Posterior vena cava (tissue), 2 donors: ENCODE measurements at regions of chr5 and their contacts with region 1.

Region 1: DNA sequence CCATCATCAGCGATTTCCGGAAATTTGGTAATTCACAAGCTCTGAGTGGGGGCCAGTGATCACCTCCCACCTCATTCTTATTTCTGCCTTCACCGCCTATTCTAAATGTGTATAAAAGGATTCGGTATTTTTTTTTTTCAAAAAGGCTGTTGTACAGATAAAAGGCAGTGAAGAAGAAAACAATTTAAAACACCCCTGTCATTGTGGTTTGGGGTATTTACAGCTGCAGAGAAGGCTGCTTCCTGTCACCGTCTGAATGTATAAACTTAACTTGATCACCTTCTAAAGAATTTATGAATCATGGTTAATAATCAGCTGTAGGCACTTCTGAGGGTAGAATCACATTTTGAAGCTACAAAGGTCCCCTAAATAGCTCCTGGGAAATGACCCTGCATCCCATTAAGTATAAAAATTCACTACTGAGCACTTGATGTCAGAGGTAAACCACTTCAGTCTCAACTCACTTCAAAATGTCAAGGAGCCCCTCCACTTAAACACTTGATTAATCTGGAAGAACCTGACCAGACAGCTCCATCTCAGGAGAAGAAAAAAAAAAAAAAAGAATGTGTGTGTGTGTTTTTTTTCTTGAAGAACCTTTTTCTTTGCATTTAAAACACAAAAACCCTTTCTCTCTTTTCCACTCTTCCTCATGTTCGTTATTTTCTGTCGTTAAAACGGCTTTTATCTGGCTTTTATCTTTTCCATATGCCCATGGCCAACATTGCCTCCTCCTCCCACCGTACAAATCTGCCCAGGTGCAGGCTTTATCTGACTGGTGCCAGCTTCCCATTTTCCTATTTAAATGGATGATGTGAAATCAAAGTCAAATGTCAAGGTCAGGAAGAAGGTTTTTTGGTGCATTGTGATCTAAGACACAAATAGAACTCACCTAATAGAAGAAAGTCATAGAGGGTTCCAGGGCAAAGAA is 291.2 kb downstream of the IRX1 start:
- DNase-seq: no peak

Region 2: DNA sequence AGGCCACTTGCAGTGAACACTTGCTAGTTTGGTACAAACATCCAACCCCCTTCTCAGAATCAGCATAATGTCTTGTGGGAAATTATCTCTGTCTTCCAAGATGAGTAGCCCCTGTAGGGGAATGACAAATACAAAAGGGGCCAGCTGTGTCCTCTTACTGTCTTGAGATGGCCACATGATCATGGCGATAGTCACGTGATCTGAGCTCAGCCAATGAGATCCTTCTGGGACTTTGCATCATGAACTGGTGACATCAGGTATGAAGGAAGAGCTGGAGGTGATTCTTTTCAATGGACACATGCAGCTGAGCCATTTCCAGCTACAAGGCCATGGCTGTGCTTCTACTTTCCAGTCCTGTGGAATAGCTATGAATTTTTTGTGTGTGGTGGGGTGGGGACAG is 84.8 kb before region 1 on chr5:
- intact Hi-C with region 1: loop called in 1 of 2 experiments (anchors 1 kb)
- DNase-seq: no peak